ENCODE measurements at regions of chr5 and their contacts with region 1.

Region 1: GRCh38 chr5:53095931-53096525 is 13.5 kb downstream of the MOCS2 start:
- DNase-seq: peak; percentile 52 to 58
- H3K4me3 ChIP-seq: no peak overlapping the region
- H3K27ac ChIP-seq: no peak overlapping the region
- H3K4me1 ChIP-seq: no peaks in the 10 kb centered on the region
- H3K27me3 ChIP-seq: no peaks in the 10 kb centered on the region
- CTCF ChIP-seq: peak; percentile 76 to 85 (median 79)
- POLR2A ChIP-seq: no peak

Region 2: DNA sequence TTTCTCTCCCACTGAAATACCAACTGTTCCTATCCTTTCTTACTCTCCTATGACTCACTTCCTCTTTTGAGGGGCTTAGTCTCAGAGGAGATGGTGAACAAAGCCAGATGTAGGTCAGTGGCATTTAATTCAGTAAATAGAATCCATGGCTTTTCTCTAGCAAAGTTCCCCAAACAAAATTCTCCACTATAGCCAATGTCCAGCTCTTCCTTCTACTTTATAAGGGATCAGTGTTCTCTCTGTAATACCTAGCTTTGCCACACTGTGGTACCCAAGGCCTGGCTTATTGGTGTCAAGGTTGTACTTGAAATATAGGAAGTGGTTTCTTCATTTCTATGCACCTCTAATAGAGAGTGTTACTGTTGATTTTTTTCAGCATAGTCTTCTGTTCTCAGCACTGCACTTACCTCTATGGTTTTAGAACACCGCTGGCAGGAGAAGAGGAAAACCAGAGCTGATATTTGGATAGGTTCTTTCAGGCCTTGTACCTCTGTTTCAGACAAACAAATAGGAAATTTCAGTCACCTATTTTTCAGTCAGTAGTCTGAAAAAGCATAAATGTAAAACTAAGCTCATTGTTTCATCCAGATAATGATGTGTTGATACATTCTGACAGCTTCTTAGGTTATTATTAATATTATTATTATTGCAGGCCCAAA is 147.5 kb before region 1 on chr5:
- intact Hi-C with region 1: loop called (anchors 10 kb)
- DNase-seq: peak in 1 of 2 donors; percentile 71
- H3K4me3 ChIP-seq: no peak overlapping the region
- H3K27ac ChIP-seq: no peak overlapping the region
- H3K4me1 ChIP-seq: no peaks in the 10 kb centered on the region
- H3K27me3 ChIP-seq: no peaks in the 10 kb centered on the region
- CTCF ChIP-seq: peak; percentile 55 to 89 (median 89)
- POLR2A ChIP-seq: no peak

Region 3: GRCh38 chr5:53109443-53110127 is 13.6 kb after region 1 on chr5 and contains the start of gene MOCS2:
- intact Hi-C with region 1: no loop called
- DNase-seq: peak; percentile 76 to 85
- H3K4me3 ChIP-seq: peak within 1 kb of the TSS; percentile 76 to 89 (median 79)
- H3K27ac ChIP-seq: peak within 1 kb of the TSS; percentile 83
- H3K4me1 ChIP-seq: peaks cover 0 to 4% of the 10 kb centered on the region in 2 donors
- H3K27me3 ChIP-seq: no peaks in the 10 kb centered on the region
- CTCF ChIP-seq: no peak
- POLR2A ChIP-seq: peak; percentile 44
- total RNA-seq, gene MOCS2: 48.2 to 58.6 (median 56.2) TPM

Measured in breast epithelium (tissue), 4 donors.